ENCODE measurements at regions of chr5 and their contacts with region 1.

Region 1: GRCh38 chr5:68287976-68288706 is 72.6 kb downstream of the PIK3R1 start:
- DNase-seq: peak; percentile 75 to 76
- H3K4me3 ChIP-seq: peak overlapping the region; percentile 42
- H3K4me3 Mint-ChIP-seq: peak overlapping the region; percentile 88
- H3K27ac Mint-ChIP-seq: peak overlapping the region; percentile 83
- H3K4me1 ChIP-seq: peaks cover 29% of the 10 kb centered on the region
- H3K4me1 Mint-ChIP-seq: peaks cover 40% of the 10 kb centered on the region
- H3K27me3 ChIP-seq: no peaks in the 10 kb centered on the region
- H3K27me3 Mint-ChIP-seq: no peaks in the 10 kb centered on the region
- CTCF ChIP-seq: no peak

Region 2: GRCh38 chr5:68331192-68332079 is 43.3 kb after region 1 on chr5:
- CTCF ChIA-PET with region 1: no interaction called
- POLR2A ChIA-PET with region 1: no interaction called
- intact Hi-C with region 1: no loop called
- DNase-seq: no peak
- H3K4me3 ChIP-seq: no peak overlapping the region
- H3K4me3 Mint-ChIP-seq: no peak overlapping the region
- H3K27ac Mint-ChIP-seq: no peak overlapping the region
- H3K4me1 ChIP-seq: no peaks in the 10 kb centered on the region
- H3K4me1 Mint-ChIP-seq: peaks cover 10% of the 10 kb centered on the region
- H3K27me3 ChIP-seq: no peaks in the 10 kb centered on the region
- H3K27me3 Mint-ChIP-seq: no peaks in the 10 kb centered on the region
- CTCF ChIP-seq: no peak

Region 3: DNA sequence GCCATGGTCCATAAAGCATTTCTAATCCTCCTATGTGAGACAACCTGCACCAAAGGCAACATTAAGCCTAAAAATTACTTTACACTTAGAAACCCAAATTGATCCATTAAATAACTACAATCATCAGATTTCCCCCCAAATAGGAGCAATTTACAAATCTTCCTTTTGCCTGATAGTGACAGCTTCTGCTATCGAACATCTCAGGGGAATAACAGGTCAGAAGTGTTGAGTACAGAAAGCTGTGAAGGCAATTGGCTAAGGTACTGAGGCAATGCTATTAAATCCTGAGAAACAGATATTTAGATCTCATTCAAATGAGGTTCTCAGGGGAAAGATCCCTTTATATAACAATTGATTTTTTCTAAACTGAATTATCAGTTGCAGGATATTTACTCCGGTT is 68.5 kb after region 1 on chr5:
- CTCF ChIA-PET with region 1: no interaction called
- POLR2A ChIA-PET with region 1: no interaction called
- intact Hi-C with region 1: loop called (anchors 5 kb)
- DNase-seq: no peak
- H3K4me3 ChIP-seq: no peak overlapping the region
- H3K4me3 Mint-ChIP-seq: no peak overlapping the region
- H3K27ac Mint-ChIP-seq: no peak overlapping the region
- H3K4me1 ChIP-seq: no peaks in the 10 kb centered on the region
- H3K4me1 Mint-ChIP-seq: peaks cover 6% of the 10 kb centered on the region
- H3K27me3 ChIP-seq: no peaks in the 10 kb centered on the region
- H3K27me3 Mint-ChIP-seq: peaks cover 5% of the 10 kb centered on the region
- CTCF ChIP-seq: no peak

Region 4: DNA sequence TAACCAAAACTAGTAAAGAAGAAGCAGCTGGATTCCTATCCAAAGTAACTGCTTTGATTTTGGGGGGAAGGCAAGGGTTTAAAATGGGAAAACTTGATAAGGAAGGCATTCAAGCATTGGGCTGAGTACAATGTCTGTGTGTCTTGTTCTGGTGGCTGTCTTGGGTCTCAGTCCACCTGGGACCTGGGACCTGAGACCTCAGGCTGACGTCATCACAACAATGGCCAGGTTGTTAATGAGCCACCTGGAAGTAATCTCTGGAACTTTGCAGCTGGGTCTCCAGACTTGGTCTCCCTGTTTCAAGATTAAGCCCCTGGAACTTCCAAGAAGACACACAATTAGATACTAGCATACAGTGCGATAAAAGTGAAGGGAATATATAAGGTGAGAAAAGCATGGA is 84.9 kb after region 1 on chr5:
- CTCF ChIA-PET with region 1: no interaction called
- POLR2A ChIA-PET with region 1: no interaction called
- intact Hi-C with region 1: no loop called
- DNase-seq: no peak
- H3K4me3 ChIP-seq: no peak overlapping the region
- H3K4me3 Mint-ChIP-seq: no peak overlapping the region
- H3K27ac Mint-ChIP-seq: no peak overlapping the region
- H3K4me1 ChIP-seq: no peaks in the 10 kb centered on the region
- H3K4me1 Mint-ChIP-seq: no peaks in the 10 kb centered on the region
- H3K27me3 ChIP-seq: no peaks in the 10 kb centered on the region
- H3K27me3 Mint-ChIP-seq: peaks cover 2% of the 10 kb centered on the region
- CTCF ChIP-seq: no peak

Region 5: GRCh38 chr5:68460147-68460798 is 172.1 kb after region 1 on chr5:
- CTCF ChIA-PET with region 1: no interaction called
- POLR2A ChIA-PET with region 1: no interaction called
- intact Hi-C with region 1: loop called (anchors 1 kb)
- DNase-seq: peak in 1 of 2 experiments; percentile 28
- H3K4me3 ChIP-seq: no peak overlapping the region
- H3K4me3 Mint-ChIP-seq: no peak overlapping the region
- H3K27ac Mint-ChIP-seq: no peak overlapping the region
- H3K4me1 ChIP-seq: peaks cover 22% of the 10 kb centered on the region
- H3K4me1 Mint-ChIP-seq: no peaks in the 10 kb centered on the region
- H3K27me3 ChIP-seq: no peaks in the 10 kb centered on the region
- H3K27me3 Mint-ChIP-seq: no peaks in the 10 kb centered on the region
- CTCF ChIP-seq: peak; percentile 30 to 52

Region 6: DNA sequence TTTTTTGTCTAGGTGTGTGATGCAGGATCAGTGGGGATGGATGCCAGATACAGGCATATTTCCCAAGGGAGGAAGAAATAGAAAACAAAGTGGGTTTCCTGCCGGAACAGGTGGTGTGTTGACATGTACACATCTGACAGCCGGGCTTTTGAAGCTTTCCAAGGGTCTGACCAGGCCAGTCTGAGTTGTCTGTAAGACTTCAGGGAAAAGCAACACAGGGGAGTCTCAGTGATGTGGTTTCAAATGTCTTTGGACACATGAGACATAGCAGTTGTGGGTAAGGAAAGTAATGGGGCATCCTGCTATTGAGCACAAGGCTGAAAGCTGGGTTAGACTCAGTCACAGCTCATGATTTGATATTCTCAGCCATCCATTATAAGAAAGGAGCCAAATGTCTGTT is 202.3 kb after region 1 on chr5:
- CTCF ChIA-PET with region 1: no interaction called
- POLR2A ChIA-PET with region 1: no interaction called
- intact Hi-C with region 1: no loop called
- DNase-seq: no peak
- H3K4me3 ChIP-seq: no peak overlapping the region
- H3K4me3 Mint-ChIP-seq: no peak overlapping the region
- H3K27ac Mint-ChIP-seq: no peak overlapping the region
- H3K4me1 ChIP-seq: no peaks in the 10 kb centered on the region
- H3K4me1 Mint-ChIP-seq: no peaks in the 10 kb centered on the region
- H3K27me3 ChIP-seq: no peaks in the 10 kb centered on the region
- H3K27me3 Mint-ChIP-seq: no peaks in the 10 kb centered on the region
- CTCF ChIP-seq: no peak

Region 7: DNA sequence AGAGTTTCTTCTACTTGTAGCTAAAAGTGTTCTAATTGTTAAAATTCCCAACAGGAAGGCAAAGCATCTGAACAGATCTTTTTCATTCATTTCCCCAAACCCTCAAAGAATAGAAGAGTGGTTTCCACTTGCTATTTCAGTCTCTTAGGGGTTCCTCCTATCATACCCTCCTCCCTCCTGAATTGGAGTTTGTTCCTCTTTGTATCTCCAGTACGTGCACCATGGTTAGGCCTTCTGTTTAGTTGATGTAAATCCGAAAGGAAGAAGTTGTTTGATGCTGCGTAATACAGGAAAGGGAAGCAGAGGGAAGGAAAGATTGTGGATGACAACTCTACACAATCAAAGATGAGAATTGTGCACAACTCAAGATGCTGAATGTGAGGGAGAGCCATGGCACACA is 231.0 kb after region 1 on chr5:
- CTCF ChIA-PET with region 1: no interaction called
- POLR2A ChIA-PET with region 1: no interaction called
- intact Hi-C with region 1: no loop called
- DNase-seq: no peak
- H3K4me3 ChIP-seq: no peak overlapping the region
- H3K4me3 Mint-ChIP-seq: no peak overlapping the region
- H3K27ac Mint-ChIP-seq: no peak overlapping the region
- H3K4me1 ChIP-seq: no peaks in the 10 kb centered on the region; the same call in 1 of the 2 replicates
- H3K4me1 Mint-ChIP-seq: peaks cover 6% of the 10 kb centered on the region
- H3K27me3 ChIP-seq: no peaks in the 10 kb centered on the region
- H3K27me3 Mint-ChIP-seq: no peaks in the 10 kb centered on the region
- CTCF ChIP-seq: no peak

Region 8: DNA sequence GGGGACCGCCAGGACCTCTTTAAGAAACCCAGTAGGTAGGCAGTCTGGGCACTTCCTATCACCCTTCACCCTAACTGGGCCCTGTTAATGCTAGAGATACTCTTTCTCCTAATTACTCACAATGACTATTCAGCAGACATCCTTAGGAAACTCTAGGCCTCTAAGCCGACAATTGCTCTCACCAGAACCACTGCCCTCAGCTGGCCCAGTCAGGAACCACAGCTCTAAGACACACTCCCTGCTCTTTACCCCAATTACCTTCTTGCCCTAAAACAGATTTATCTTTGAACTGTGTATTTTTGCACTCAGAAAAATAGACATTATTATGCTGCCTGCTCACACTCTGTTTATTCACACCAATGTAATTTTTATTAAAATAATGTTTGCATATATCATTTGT is 373.1 kb after region 1 on chr5:
- CTCF ChIA-PET with region 1: no interaction called
- POLR2A ChIA-PET with region 1: no interaction called
- intact Hi-C with region 1: loop called (anchors 1 kb)
- DNase-seq: peak in 1 of 2 experiments; percentile 24
- H3K4me3 ChIP-seq: no peak overlapping the region
- H3K4me3 Mint-ChIP-seq: no peak overlapping the region
- H3K27ac Mint-ChIP-seq: no peak overlapping the region
- H3K4me1 ChIP-seq: no peaks in the 10 kb centered on the region
- H3K4me1 Mint-ChIP-seq: no peaks in the 10 kb centered on the region
- H3K27me3 ChIP-seq: no peaks in the 10 kb centered on the region
- H3K27me3 Mint-ChIP-seq: no peaks in the 10 kb centered on the region
- CTCF ChIP-seq: peak; percentile 38 to 50

Region 9: GRCh38 chr5:68962757-68963484 is 674.8 kb after region 1 on chr5:
- CTCF ChIA-PET with region 1: no interaction called
- POLR2A ChIA-PET with region 1: no interaction called
- intact Hi-C with region 1: loop called (anchors 2 kb)
- DNase-seq: peak; percentile 63 to 73
- H3K4me3 ChIP-seq: no peak overlapping the region
- H3K4me3 Mint-ChIP-seq: peak overlapping the region; percentile 24
- H3K27ac Mint-ChIP-seq: no peak overlapping the region
- H3K4me1 ChIP-seq: no peaks in the 10 kb centered on the region
- H3K4me1 Mint-ChIP-seq: no peaks in the 10 kb centered on the region
- H3K27me3 ChIP-seq: no peaks in the 10 kb centered on the region
- H3K27me3 Mint-ChIP-seq: no peaks in the 10 kb centered on the region
- CTCF ChIP-seq: peak; percentile 89 to 93

Measured in Caco-2 (cell line).